ENCODE measurements at regions of chr17 and their contacts with region 1.

Region 1: GRCh38 chr17:7136266-7136877 is 21.8 kb upstream of the ASGR2 start:
- DNase-seq: peak; percentile 69
- H3K4me3 ChIP-seq: no peak overlapping the region
- H3K27ac ChIP-seq: no peak overlapping the region
- H3K4me1 ChIP-seq: peaks cover 13% of the 10 kb centered on the region
- H3K27me3 ChIP-seq: peaks cover 96% of the 10 kb centered on the region
- CTCF ChIP-seq: peak; percentile 92

Region 2: DNA sequence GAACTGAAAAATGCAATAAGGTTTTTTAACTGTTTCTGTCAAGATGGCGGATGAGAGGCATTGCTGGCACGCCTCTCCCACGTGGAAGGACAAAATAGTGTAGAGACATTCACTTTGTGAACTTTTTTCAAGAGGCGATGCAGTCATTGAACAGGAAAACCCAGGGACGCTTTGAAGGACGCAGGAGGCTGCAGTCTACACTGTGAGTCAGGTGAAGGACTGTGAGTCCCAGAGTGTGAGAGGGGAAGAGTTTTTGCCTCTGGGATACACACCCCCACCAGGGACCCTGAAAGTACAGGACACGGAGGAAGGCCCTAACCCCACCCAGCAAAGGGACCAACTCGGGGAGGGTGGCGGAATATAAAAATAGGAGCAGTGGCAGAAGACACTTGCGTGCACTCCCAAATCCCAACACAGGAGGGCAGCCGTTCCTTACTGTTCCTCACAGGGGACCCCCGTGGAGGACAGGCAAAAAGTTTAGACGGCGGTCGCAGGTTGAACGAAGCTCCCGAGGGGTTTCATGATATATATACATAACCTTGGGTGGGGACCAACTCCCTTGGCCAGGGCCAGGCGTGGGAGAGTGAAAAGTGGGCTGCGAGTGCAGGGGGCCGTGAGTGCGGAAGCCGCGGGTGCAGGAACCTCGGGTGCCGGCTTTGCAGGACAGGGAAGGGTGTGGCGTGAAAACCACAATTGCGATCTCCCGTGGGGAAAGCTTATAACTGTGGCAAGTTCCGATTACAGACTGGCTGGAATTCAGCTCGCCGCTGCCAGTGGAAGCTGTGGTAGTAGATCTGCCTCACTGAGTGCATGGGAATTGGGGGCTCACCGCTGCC is 222.5 kb before region 1 on chr17:
- intact Hi-C with region 1: loop called (anchors 10 kb)
- DNase-seq: peak; percentile 79
- H3K4me3 ChIP-seq: peak overlapping the region; percentile 60
- H3K27ac ChIP-seq: peak overlapping the region; percentile 23
- H3K4me1 ChIP-seq: peaks cover 11% of the 10 kb centered on the region
- H3K27me3 ChIP-seq: peaks cover 44% of the 10 kb centered on the region
- CTCF ChIP-seq: peak; percentile 92

Region 3: GRCh38 chr17:7045909-7046724 is 90.3 kb before region 1 on chr17:
- intact Hi-C with region 1: loop called (anchors 5 kb)
- DNase-seq: no peak
- H3K4me3 ChIP-seq: peak overlapping the region; percentile 48
- H3K27ac ChIP-seq: no peak overlapping the region
- H3K4me1 ChIP-seq: peaks cover 45% of the 10 kb centered on the region
- H3K27me3 ChIP-seq: peaks cover 82% of the 10 kb centered on the region
- CTCF ChIP-seq: peak; percentile 87